Transverse colon (tissue), 4 donors: ENCODE measurements at regions of chr16 and their contacts with region 1.

Region 1: GRCh38 chr16:55876854-55877253 is 1.7 kb upstream of the CES5A start:
- DNase-seq: no peak
- H3K4me3 ChIP-seq: no peak overlapping the region
- H3K27ac ChIP-seq: no peak overlapping the region
- H3K4me1 ChIP-seq: no peaks in the 10 kb centered on the region
- H3K27me3 ChIP-seq: no peaks in the 10 kb centered on the region
- CTCF ChIP-seq: no peak
- EP300 ChIP-seq: no peak
- POLR2A ChIP-seq: no peak

Region 2: DNA sequence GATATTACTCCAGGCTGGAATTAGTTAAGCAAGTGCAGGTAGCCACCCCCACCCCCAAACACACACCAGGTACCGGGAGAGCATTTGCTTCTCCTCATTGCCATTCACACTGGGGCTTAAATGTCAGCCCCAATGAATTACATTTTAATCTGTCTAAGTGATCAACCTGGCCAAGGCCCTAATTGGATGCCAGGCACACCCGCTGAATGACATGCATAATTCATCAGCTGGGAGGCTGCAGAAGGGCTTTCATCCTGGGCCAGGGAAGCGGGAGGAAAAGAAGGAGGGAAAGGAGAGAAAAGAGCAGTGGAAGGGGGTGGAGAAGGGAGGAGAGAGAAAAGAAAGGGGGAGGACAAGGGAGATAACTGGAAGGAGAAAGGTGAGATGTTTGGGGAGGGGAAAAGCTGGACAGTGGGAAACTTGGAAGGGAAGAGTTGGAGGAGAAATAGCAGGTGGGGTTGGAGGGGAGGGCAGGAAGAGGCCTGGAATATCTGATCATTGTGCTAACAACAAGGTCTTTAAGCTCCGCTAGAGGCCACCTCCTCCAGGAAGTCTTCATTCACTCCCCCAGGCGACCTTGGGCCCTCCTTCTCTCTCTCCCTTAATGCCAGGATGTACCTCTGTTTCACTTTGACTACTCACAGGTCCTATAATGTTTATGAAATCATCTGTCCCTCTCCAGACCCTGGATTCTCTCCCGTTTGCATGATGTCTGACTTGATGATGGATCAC is 38.4 kb after region 1 on chr16:
- in situ Hi-C with region 1: no loop called
- intact Hi-C with region 1: loop called (anchors 1 kb)
- DNase-seq: no peak
- H3K4me3 ChIP-seq: no peak overlapping the region
- H3K27ac ChIP-seq: no peak overlapping the region
- H3K4me1 ChIP-seq: no peaks in the 10 kb centered on the region
- H3K27me3 ChIP-seq: no peaks in the 10 kb centered on the region
- CTCF ChIP-seq: no peak
- EP300 ChIP-seq: no peak
- POLR2A ChIP-seq: no peak

Region 3: GRCh38 chr16:56005958-56006357 is 129.1 kb after region 1 on chr16:
- in situ Hi-C with region 1: no loop called
- intact Hi-C with region 1: no loop called
- DNase-seq: no peak
- H3K4me3 ChIP-seq: no peak overlapping the region
- H3K27ac ChIP-seq: no peak overlapping the region
- H3K4me1 ChIP-seq: no peaks in the 10 kb centered on the region
- H3K27me3 ChIP-seq: no peaks in the 10 kb centered on the region
- CTCF ChIP-seq: no peak
- EP300 ChIP-seq: no peak
- POLR2A ChIP-seq: no peak